MCF 10A (cell line): ENCODE measurements at regions of chr11 and their contacts with region 1.

Region 1: DNA sequence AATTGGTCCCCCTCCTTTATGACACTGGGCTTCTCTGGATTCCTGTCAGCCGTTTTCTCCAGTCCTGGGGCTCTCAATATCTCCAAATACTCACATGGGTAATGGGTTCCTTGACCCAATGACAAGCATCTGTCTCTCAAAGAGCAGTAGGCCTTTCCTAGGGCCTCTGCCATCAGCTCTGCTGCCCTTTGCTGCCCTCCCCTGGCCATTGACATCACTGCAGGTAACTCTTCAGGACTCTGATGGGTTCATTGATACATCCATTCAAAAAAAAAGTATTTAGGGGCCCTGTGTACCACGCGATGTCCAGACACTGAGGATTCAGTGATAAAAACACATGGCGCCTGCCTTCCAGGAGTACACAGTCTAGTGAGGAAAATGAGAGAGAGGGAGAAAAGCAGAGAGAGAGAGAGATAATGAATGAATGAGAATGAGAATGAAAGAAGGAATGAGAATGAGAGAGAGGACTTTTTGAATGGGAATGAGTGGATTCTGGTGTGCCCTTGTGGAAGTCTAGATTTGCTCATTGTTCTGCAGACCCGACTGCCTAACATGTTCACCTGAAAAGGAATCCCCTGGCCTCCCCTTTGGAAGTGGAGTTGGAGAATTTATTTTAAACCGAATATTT is 42.6 kb upstream of the OLFML1 start:
- DNase-seq: peak; percentile 70
- H3K4me3 Mint-ChIP-seq: no peak overlapping the region
- H3K27ac Mint-ChIP-seq: no peak overlapping the region
- H3K4me1 Mint-ChIP-seq: peaks cover 5% of the 10 kb centered on the region
- H3K27me3 Mint-ChIP-seq: no peaks in the 10 kb centered on the region
- CTCF ChIP-seq: peak; percentile 86

Region 2: DNA sequence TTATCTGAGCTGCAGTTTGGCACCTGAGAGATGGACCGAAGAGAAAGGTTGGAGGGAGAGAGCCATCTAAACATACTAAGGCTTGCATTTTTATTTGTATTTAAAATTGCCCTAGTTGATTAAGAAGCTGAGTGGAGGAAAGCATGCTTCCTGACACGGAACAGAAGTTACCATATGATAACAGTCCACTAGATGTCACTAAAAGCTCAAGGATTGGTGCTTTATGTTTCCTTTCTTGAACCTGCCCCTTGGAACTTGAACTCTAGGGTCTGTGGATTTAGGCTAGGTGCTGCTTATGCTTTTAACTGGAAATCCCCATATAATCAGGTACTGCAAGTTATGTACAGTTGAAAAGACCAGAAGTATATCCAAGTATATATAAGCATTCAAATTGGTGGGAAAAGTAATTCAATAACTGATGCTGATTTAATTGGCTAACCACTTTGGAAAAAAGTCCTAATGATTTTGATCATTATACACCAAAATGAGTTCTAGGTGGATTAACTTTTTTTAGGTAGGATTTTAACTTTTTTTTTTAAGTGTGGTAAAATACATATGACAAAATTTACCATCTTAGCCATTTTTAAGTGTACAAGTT is 344.4 kb before region 1 on chr11:
- CTCF ChIA-PET with region 1: interaction called, 54 read pairs
- POLR2A ChIA-PET with region 1: no interaction called
- intact Hi-C with region 1: loop called (anchors 1 kb)
- DNase-seq: peak; percentile 63
- H3K4me3 Mint-ChIP-seq: no peak overlapping the region
- H3K27ac Mint-ChIP-seq: no peak overlapping the region
- H3K4me1 Mint-ChIP-seq: no peaks in the 10 kb centered on the region
- H3K27me3 Mint-ChIP-seq: peaks cover 84% of the 10 kb centered on the region
- CTCF ChIP-seq: peak; percentile 73

Region 3: DNA sequence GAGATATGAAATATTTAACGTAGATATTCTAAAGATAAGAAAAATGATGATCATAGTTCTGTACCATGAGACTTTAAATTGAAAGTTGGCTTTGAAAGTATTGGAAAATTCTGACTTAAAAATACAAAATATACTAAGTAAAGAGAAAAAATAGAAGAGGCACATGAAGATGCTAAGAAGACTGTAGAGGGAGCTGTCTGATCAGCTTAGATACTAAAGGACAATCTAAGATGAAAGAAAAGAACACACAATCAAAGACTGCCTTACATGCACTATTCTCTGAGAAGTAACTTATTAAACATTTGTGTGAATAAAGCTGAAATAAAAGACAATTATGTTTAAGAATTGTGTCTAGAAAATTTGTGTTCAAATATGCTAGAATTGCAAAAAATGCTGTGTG is 298.8 kb before region 1 on chr11:
- CTCF ChIA-PET with region 1: interaction called, 10 read pairs
- POLR2A ChIA-PET with region 1: no interaction called
- intact Hi-C with region 1: loop called (anchors 1 kb)
- DNase-seq: peak; percentile 16
- H3K4me3 Mint-ChIP-seq: no peak overlapping the region
- H3K27ac Mint-ChIP-seq: no peak overlapping the region
- H3K4me1 Mint-ChIP-seq: no peaks in the 10 kb centered on the region
- H3K27me3 Mint-ChIP-seq: peaks cover 21% of the 10 kb centered on the region
- CTCF ChIP-seq: peak; percentile 31

Region 4: GRCh38 chr11:7353100-7353499 is 89.6 kb before region 1 on chr11:
- CTCF ChIA-PET with region 1: interaction called, 49 read pairs
- POLR2A ChIA-PET with region 1: no interaction called
- intact Hi-C with region 1: loop called (anchors 1 kb)
- DNase-seq: peak; percentile 50
- H3K4me3 Mint-ChIP-seq: no peak overlapping the region
- H3K27ac Mint-ChIP-seq: no peak overlapping the region
- H3K4me1 Mint-ChIP-seq: peaks cover 9% of the 10 kb centered on the region
- H3K27me3 Mint-ChIP-seq: peaks cover 5% of the 10 kb centered on the region
- CTCF ChIP-seq: peak; percentile 42

Region 5: DNA sequence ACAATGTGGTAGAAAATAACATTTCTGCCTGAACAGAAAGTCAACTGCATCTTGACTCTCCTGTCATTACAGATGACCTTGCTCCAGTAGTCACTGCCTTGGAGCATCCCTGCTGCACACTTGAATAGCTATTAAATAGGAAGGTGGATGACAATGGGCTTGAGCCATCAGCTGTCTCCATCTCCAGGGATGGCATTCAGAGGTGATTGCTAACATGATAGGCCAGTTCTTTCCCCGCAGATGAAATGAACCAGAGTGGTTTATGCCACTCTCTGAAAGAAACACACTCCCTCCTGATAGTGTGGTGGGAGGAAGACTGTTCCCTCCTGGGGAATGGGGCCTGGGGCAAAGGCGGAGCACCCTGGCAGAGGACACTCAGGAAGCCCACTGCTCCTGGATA is 14.5 kb before region 1 on chr11:
- CTCF ChIA-PET with region 1: interaction called, 21 read pairs
- POLR2A ChIA-PET with region 1: no interaction called
- intact Hi-C with region 1: no loop called
- DNase-seq: no peak
- H3K4me3 Mint-ChIP-seq: no peak overlapping the region
- H3K27ac Mint-ChIP-seq: no peak overlapping the region
- H3K4me1 Mint-ChIP-seq: no peaks in the 10 kb centered on the region
- H3K27me3 Mint-ChIP-seq: peaks cover 29% of the 10 kb centered on the region
- CTCF ChIP-seq: no peak

Region 6: DNA sequence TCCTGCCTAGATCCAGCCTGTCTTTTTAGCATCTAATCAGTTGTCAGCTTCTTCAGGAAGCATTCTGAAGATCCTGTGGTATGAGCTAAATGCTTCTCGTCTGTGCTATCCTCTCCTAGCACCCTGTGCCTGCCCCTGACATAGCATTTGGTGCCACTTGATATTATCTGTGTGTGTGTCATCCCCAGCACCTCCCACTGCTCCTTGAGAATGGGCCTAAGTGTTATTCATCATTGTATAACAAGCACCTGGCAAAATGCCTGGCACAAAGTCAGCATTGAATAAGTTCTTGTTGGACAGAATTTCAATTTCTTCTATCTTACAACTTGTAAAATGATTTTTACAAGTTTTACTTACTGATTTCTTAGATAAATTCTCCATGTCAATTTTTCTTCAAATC is 14.5 kb after region 1 on chr11:
- CTCF ChIA-PET with region 1: interaction called, 102 read pairs
- POLR2A ChIA-PET with region 1: no interaction called
- intact Hi-C with region 1: no loop called
- DNase-seq: peak; percentile 68
- H3K4me3 Mint-ChIP-seq: no peak overlapping the region
- H3K27ac Mint-ChIP-seq: no peak overlapping the region
- H3K4me1 Mint-ChIP-seq: peaks cover 7% of the 10 kb centered on the region
- H3K27me3 Mint-ChIP-seq: peaks cover 12% of the 10 kb centered on the region
- CTCF ChIP-seq: no peak

Region 7: GRCh38 chr11:7513234-7514098 is 70.8 kb after region 1 on chr11 and contains the start of gene PPFIBP2:
- CTCF ChIA-PET with region 1: interaction called, 18 read pairs
- POLR2A ChIA-PET with region 1: no interaction called
- intact Hi-C with region 1: no loop called
- DNase-seq: peak; percentile 70
- H3K4me3 Mint-ChIP-seq: peak within 1 kb of the TSS; percentile 83
- H3K27ac Mint-ChIP-seq: peak within 1 kb of the TSS; percentile 52
- H3K4me1 Mint-ChIP-seq: no peaks in the 10 kb centered on the region
- H3K27me3 Mint-ChIP-seq: peaks cover 17% of the 10 kb centered on the region
- CTCF ChIP-seq: peak; percentile 74
- total RNA-seq, gene PPFIBP2: 3.5 and 4.3 TPM in 2 replicates

Region 8: GRCh38 chr11:7582338-7582985 is 139.8 kb after region 1 on chr11:
- CTCF ChIA-PET with region 1: no interaction called
- POLR2A ChIA-PET with region 1: no interaction called
- intact Hi-C with region 1: no loop called
- DNase-seq: no peak
- H3K4me3 Mint-ChIP-seq: no peak overlapping the region
- H3K27ac Mint-ChIP-seq: no peak overlapping the region
- H3K4me1 Mint-ChIP-seq: peaks cover 37% of the 10 kb centered on the region
- H3K27me3 Mint-ChIP-seq: no peaks in the 10 kb centered on the region
- CTCF ChIP-seq: no peak

Region 9: DNA sequence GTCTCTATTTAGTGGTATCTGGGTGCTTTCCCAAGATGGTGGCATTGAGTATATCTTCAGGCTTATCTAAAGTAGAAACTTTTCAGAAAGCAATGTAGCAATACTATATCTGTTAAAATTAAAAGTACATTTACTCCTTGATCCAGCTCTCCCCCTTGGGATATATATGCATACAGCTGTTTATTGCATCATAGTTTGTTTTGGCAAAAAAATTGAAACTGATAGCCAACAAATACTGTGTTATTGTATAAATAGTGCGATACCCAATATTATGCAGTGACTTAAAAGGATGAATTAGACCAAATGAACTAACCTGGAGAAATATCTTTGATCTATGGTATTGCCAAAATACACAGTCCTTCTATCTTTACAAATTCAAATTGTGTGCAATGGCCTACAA is 507.2 kb after region 1 on chr11:
- CTCF ChIA-PET with region 1: no interaction called
- POLR2A ChIA-PET with region 1: no interaction called
- intact Hi-C with region 1: no loop called
- DNase-seq: no peak
- H3K4me3 Mint-ChIP-seq: no peak overlapping the region
- H3K27ac Mint-ChIP-seq: no peak overlapping the region
- H3K4me1 Mint-ChIP-seq: no peaks in the 10 kb centered on the region
- H3K27me3 Mint-ChIP-seq: no peaks in the 10 kb centered on the region
- CTCF ChIP-seq: no peak